ENCODE measurements at regions of chr6 and their contacts with region 1.

Region 1: GRCh38 chr6:144215932-144216667 is 65.8 kb downstream of the STX11 start:
- DNase-seq: peak; percentile 100
- H3K4me3 ChIP-seq: peak overlapping the region; percentile 35 to 56 (median 45)
- H3K27ac ChIP-seq: peak overlapping the region; percentile 17
- H3K4me1 ChIP-seq: peaks cover 14% of the 10 kb centered on the region
- H3K27me3 ChIP-seq: no peaks in the 10 kb centered on the region
- CTCF ChIP-seq: peak; percentile 81 to 85
- POLR2A ChIP-seq: peak; percentile 50

Region 2: GRCh38 chr6:143513410-143513809 is 702.7 kb before region 1 on chr6:
- CTCF ChIA-PET with region 1: no interaction called
- POLR2A ChIA-PET with region 1: no interaction called
- dilution Hi-C with region 1: no loop called
- intact Hi-C with region 1: no loop called
- DNase-seq: no peak
- H3K4me3 ChIP-seq: no peak overlapping the region
- H3K27ac ChIP-seq: no peak overlapping the region
- H3K4me1 ChIP-seq: peaks cover 18% of the 10 kb centered on the region
- H3K27me3 ChIP-seq: peaks cover 10 to 21% of the 10 kb centered on the region in 2 experiments
- CTCF ChIP-seq: peak in 1 of 2 donors; percentile 30
- POLR2A ChIP-seq: no peak

Region 3: DNA sequence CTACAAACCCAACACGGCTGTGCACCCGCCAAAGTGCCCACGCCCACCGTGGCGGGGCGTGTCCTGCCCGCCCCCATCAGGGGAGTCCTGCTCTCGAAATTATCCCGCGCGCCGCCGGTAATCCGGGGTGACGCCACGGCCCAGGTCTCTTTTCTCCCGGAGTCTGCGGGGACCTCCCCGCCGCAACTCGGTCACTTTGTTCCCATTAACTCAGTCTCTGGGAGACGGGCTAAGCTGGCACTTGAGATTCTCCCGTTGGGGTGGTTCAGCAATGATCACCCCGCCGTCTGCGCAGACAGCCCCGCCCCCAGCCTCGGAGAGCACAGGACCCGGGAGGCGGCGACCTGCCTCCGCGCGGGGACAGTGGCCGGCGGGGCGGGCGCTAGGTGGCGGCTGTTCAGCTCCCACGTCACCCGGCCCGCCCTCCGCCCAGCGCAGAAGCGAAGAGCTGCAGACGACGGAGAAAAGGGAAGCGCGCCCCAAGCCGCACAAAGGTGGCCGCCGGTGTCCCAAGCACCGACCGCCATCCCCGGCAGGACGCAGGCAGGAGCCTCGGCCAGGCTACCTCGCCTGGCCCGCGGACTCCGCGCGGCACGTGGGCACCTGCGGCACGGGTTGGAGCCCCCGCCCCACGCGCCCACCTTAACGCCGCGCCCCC is 152.2 kb before region 1 on chr6:
- CTCF ChIA-PET with region 1: interaction called, 3 read pairs
- POLR2A ChIA-PET with region 1: no interaction called
- dilution Hi-C with region 1: no loop called
- intact Hi-C with region 1: loop called (anchors 1 kb)
- DNase-seq: peak; percentile 29
- H3K4me3 ChIP-seq: peak overlapping the region; percentile 23 to 52 (median 51)
- H3K27ac ChIP-seq: no peak overlapping the region
- H3K4me1 ChIP-seq: peaks cover 3% of the 10 kb centered on the region
- H3K27me3 ChIP-seq: peaks cover 37 to 60% of the 10 kb centered on the region in 2 experiments
- CTCF ChIP-seq: peak; percentile 7 to 39
- POLR2A ChIP-seq: no peak

Region 4: DNA sequence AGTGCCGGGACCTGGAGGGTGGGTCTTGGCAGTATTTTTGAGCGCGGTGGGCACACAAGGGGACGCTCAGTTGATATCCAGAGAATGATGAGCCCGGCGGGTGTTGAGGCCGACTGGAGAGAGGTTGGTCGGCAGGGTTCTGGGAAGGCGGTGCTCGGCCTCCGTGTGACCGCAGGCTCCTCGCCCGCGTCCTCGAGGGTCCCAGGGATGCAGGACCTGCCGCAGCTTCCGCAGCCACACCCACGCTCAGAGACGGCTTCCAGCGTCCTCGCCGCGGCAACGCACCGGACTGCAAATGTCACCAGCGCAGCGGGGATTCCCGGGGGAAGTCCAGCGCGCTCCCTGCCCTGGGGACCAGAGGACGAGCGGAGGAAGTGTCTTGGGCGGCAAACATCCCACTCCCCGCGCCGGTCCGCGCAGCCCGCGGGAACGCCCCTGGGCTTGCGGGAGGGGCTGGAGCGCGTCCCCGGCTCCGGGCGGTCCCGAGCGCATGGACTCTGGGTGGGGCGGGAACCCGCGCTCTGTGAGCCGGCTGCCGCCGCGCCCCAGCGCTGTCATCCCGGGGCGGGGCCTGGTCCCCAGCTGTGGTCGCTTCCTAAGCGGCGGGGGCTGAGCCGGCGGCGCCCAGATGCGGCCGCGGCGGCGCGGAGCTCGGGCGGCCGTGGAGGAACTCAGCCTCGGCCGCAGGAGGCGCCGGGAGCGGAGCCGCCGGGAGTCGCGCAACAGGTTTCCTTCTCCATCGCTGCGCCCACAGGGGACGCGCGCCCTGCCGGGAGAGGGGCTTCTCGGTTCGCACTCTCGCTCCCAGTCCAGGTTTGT is 66.0 kb before region 1 on chr6 and contains the start of gene STX11:
- CTCF ChIA-PET with region 1: interaction called, 9 read pairs
- POLR2A ChIA-PET with region 1: no interaction called
- dilution Hi-C with region 1: no loop called
- intact Hi-C with region 1: loop called (anchors 1 kb)
- DNase-seq: peak; percentile 53
- H3K4me3 ChIP-seq: peak within 1 kb of the TSS; percentile 41 to 69 (median 52)
- H3K27ac ChIP-seq: peak within 1 kb of the TSS; percentile 72
- H3K4me1 ChIP-seq: peaks cover 16% of the 10 kb centered on the region
- H3K27me3 ChIP-seq: no peaks in the 10 kb centered on the region
- CTCF ChIP-seq: peak in 1 of 2 donors; percentile 27
- POLR2A ChIP-seq: peak; percentile 75
- total RNA-seq, gene STX11: 4.7 and 6.0 TPM in 2 replicates

Region 5: GRCh38 chr6:144284783-144285547 is 68.9 kb after region 1 on chr6 and contains the start of gene UTRN:
- CTCF ChIA-PET with region 1: interaction called, 9 read pairs
- POLR2A ChIA-PET with region 1: no interaction called
- dilution Hi-C with region 1: no loop called
- intact Hi-C with region 1: loop called (anchors 1 kb)
- DNase-seq: peak; percentile 83
- H3K4me3 ChIP-seq: peak within 1 kb of the TSS; percentile 83 to 93 (median 88)
- H3K27ac ChIP-seq: peak within 1 kb of the TSS; percentile 89
- H3K4me1 ChIP-seq: peaks cover 14% of the 10 kb centered on the region
- H3K27me3 ChIP-seq: no peaks in the 10 kb centered on the region
- CTCF ChIP-seq: no peak
- POLR2A ChIP-seq: peak; percentile 73
- total RNA-seq, gene UTRN: 224 and 228 TPM in 2 replicates

Region 6: DNA sequence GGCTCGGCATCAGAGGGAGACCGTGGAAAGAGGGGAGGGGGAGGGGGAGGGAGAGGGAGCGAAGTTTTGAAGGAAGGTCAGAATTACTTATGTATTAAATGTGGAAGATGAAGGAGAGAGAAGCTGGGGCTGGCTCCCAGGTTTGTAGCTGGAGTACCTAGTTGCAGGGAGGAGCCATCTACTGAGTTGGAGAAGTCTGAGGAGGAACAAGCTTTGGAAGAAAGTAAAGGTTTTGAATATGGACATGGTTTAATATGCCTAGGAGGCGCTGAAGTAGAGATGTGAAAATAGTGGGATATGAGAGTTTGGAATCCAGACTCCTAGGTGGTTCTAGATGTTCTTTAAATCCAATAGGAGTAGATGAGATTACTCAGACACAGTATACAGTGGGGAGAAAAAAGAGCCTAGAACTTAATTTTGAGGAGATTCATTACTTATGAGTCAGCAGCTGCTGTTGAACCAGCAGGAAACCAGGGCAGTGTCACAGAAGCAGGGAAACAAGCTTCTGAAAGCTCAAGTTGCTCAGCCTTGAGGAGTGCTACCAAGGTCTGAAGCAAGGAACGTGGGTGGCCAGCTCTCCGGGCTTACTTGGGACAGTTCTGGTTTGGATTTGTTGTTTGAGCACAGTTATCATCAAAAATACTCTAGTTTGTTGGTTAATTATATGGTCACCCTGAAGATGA is 218.3 kb after region 1 on chr6:
- CTCF ChIA-PET with region 1: interaction called, 10 read pairs
- POLR2A ChIA-PET with region 1: no interaction called
- dilution Hi-C with region 1: no loop called
- intact Hi-C with region 1: loop called (anchors 1 kb)
- DNase-seq: peak; percentile 89
- H3K4me3 ChIP-seq: no peak overlapping the region
- H3K27ac ChIP-seq: peak overlapping the region; percentile 43
- H3K4me1 ChIP-seq: peaks cover 14% of the 10 kb centered on the region
- H3K27me3 ChIP-seq: no peaks in the 10 kb centered on the region
- CTCF ChIP-seq: no peak
- POLR2A ChIP-seq: no peak